Psoas muscle (tissue), 8 donors: ENCODE measurements at regions of chr4 and their contacts with region 1.

Region 1: GRCh38 chr4:87006676-87007527 is 72.1 kb downstream of the AFF1 start:
- DNase-seq: peak; percentile 94 to 97
- ATAC-seq: peak; percentile 92 to 97 (median 93)
- H3K4me3 ChIP-seq: peak overlapping the region; percentile 87
- H3K27ac ChIP-seq: peak overlapping the region; percentile 98
- H3K4me1 ChIP-seq: peaks cover 67% of the 10 kb centered on the region
- H3K27me3 ChIP-seq: no peaks in the 10 kb centered on the region
- CTCF ChIP-seq: peak; percentile 39

Region 2: DNA sequence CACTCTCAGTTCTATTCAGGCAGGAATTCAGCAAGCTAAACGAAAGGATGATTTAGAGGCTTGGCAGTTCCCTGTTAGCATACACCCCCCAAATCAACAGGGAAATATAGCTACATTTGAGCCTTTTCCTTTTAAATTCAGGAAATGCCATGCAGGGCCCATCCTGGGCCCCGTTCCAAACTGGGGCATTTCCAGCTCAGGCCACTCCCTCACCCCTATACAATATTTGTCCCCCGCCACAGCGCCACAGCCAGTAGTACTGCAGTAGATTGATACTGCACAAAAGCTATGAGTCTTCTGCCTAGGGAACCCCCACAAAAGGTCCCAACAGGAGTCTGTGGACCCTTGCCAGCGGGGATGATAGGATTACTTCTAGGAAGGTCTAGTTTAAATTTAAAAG is 545.1 kb before region 1 on chr4:
- intact Hi-C with region 1: no loop called
- DNase-seq: no peak
- ATAC-seq: no peak
- H3K4me3 ChIP-seq: no peak overlapping the region
- H3K27ac ChIP-seq: no peak overlapping the region
- H3K4me1 ChIP-seq: no peaks in the 10 kb centered on the region
- H3K27me3 ChIP-seq: no peaks in the 10 kb centered on the region
- CTCF ChIP-seq: no peak

Region 3: GRCh38 chr4:86965019-86965976 is 41.6 kb before region 1 on chr4:
- intact Hi-C with region 1: loop called in 1 of 2 experiments (anchors 5 kb)
- DNase-seq: no peak
- ATAC-seq: no peak
- H3K4me3 ChIP-seq: no peak overlapping the region
- H3K27ac ChIP-seq: no peak overlapping the region
- H3K4me1 ChIP-seq: peaks cover 43% of the 10 kb centered on the region
- H3K27me3 ChIP-seq: no peaks in the 10 kb centered on the region
- CTCF ChIP-seq: no peak

Region 4: DNA sequence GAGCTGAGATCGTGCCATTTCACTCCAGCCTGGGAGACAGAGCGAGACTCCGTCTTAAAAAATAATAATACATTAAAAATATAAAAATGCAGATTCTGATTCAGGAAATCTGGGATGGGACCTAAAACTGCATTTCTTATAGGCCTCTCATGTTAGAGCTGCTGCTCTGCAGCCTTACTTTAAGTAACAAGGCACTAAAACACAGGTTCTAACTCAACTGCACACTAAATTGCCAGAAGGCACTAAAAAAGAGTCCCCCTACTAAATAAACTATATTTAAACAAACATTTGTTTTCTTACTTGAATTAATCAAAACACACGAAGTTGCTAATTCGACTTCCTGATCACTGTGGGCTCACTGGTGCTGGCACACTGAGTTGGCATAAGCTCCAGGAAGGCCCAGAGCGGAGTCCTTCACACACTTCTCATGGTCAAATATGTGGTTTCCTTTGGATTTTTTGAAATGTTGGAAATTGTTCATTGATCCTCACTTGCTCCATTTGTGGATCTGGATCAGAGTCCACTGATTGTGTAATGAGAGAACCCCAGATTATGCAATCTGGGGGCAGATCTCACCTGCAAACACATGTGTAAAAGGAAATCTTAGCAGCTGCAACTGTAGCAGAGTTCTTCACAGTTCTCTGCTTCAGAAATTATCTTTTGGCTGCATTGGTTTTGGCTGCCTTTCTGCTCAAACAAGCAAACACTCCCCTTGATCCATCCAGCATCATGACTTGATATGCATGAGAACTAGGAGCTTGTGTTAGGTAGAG is 12.8 kb before region 1 on chr4:
- intact Hi-C with region 1: no loop called
- DNase-seq: no peak
- ATAC-seq: no peak
- H3K4me3 ChIP-seq: no peak overlapping the region
- H3K27ac ChIP-seq: no peak overlapping the region
- H3K4me1 ChIP-seq: peaks cover 9% of the 10 kb centered on the region
- H3K27me3 ChIP-seq: no peaks in the 10 kb centered on the region
- CTCF ChIP-seq: no peak

Region 5: DNA sequence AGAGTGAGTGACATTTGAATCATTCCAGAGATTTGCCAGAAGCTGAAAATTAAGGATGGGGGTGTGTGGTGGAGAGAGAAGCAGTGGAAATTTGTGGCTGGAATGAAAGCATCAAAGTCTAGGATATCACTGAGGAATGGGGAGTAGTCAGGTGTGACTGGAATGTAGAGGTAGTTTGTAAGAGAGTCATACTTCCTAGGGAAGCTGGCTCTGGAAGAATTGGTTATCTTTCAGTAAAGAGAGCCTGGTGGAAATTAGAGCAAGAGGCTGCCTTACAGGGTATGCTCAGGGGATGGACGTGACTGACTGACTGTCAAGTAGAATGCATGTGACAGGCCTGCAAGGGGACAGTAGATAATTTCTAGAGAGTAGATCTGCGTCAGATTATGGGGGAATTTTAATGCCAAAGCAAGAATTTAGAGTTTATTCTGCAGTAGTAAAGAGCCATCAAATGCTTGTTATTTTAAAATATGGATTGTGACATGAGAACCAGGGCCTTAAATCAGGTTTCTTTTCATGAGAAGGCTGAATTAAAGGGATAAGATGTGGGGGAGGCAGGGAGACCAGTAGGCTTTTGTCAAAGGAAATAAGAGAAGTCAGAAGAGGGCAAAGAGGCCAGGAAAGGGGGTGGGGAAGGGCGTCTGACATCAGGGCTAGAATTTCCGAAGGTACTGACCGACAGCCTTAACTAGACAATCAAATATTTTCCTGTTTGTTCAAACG is 37.8 kb after region 1 on chr4:
- intact Hi-C with region 1: loop called (anchors 5 kb)
- DNase-seq: no peak
- ATAC-seq: peak in 3 of 4 donors; percentile 19 to 60 (median 48)
- H3K4me3 ChIP-seq: peak overlapping the region; percentile 55
- H3K27ac ChIP-seq: peak overlapping the region; percentile 91
- H3K4me1 ChIP-seq: peaks cover 76% of the 10 kb centered on the region
- H3K27me3 ChIP-seq: no peaks in the 10 kb centered on the region
- CTCF ChIP-seq: no peak

Region 6: GRCh38 chr4:87087420-87087819 is 80.5 kb after region 1 on chr4:
- intact Hi-C with region 1: loop called (anchors 5 kb)
- DNase-seq: no peak
- ATAC-seq: peak in 1 of 4 donors; percentile 5
- H3K4me3 ChIP-seq: no peak overlapping the region
- H3K27ac ChIP-seq: peak overlapping the region; percentile 90
- H3K4me1 ChIP-seq: peaks cover 66% of the 10 kb centered on the region
- H3K27me3 ChIP-seq: no peaks in the 10 kb centered on the region
- CTCF ChIP-seq: no peak

Region 7: GRCh38 chr4:87108142-87108546 is 101.2 kb after region 1 on chr4:
- intact Hi-C with region 1: loop called in 1 of 2 experiments (anchors 1 kb)
- DNase-seq: peak; percentile 53 to 80
- ATAC-seq: peak; percentile 97 to 99 (median 98)
- H3K4me3 ChIP-seq: peak overlapping the region; percentile 51
- H3K27ac ChIP-seq: peak overlapping the region; percentile 86
- H3K4me1 ChIP-seq: peaks cover 68% of the 10 kb centered on the region
- H3K27me3 ChIP-seq: no peaks in the 10 kb centered on the region
- CTCF ChIP-seq: no peak